ENCODE measurements at regions of chrX and their contacts with region 1.

Region 1: DNA sequence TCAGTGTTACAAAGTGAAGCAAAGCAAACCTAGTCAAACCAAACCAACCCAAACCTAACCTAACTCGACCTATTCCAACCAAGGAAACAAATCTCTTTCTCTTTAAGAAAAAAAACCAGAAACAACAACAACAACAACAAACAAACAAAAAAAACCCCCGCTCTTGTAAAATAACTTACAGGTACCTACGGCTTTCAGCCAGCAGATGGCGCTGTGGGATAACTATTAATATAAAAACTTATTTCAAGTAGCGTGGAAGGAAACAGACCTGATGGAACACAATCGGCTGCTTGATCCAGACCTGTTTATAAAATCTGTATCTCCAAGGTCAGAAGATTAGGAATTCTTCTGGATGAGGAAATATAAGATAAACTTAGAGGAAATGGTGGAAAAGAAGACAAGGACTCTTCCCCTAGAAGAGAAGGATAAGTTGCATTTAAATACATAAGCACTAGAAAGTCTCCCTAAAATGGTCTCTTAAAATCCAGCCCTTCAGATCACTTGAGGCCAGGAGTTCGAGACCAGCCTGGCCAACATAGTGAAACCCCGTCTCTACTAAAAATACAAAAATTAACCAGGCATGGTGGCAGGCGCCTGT is 34.4 kb upstream of the CDKL5 start:
- DNase-seq: peak; percentile 85
- H3K4me3 Mint-ChIP-seq: no peak overlapping the region
- H3K27ac Mint-ChIP-seq: no peak overlapping the region
- H3K4me1 Mint-ChIP-seq: peaks cover 4% of the 10 kb centered on the region
- H3K27me3 Mint-ChIP-seq: no peaks in the 10 kb centered on the region

Region 2: DNA sequence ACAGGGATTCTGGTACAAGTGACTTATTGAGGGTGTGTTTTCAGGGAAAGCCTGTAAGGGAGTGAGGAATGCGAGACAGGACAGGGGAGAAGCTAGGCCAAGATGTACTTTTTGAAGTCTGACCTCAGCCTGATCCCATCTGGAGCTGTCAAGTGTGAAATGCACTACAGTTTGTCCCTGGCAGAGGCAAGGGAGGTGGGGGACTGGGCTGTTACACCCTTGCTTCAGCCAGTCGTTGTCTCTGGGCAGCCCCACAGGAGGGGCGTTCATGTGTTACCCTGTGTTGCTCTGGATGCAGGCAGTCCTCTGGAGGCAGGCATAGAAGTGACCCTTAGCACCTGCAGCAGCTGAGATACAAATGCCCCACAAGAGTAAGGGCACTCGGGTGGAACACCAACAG is 342.2 kb after region 1 on chrX:
- intact Hi-C with region 1: no loop called
- DNase-seq: no peak
- H3K4me3 Mint-ChIP-seq: no peak overlapping the region
- H3K27ac Mint-ChIP-seq: no peak overlapping the region
- H3K4me1 Mint-ChIP-seq: no peaks in the 10 kb centered on the region
- H3K27me3 Mint-ChIP-seq: no peaks in the 10 kb centered on the region

Region 3: GRCh38 chrX:18899796-18900447 is 508.9 kb after region 1 on chrX:
- intact Hi-C with region 1: loop called (anchors 10 kb)
- DNase-seq: no peak
- H3K4me3 Mint-ChIP-seq: no peak overlapping the region
- H3K27ac Mint-ChIP-seq: no peak overlapping the region
- H3K4me1 Mint-ChIP-seq: no peaks in the 10 kb centered on the region
- H3K27me3 Mint-ChIP-seq: no peaks in the 10 kb centered on the region

Region 4: DNA sequence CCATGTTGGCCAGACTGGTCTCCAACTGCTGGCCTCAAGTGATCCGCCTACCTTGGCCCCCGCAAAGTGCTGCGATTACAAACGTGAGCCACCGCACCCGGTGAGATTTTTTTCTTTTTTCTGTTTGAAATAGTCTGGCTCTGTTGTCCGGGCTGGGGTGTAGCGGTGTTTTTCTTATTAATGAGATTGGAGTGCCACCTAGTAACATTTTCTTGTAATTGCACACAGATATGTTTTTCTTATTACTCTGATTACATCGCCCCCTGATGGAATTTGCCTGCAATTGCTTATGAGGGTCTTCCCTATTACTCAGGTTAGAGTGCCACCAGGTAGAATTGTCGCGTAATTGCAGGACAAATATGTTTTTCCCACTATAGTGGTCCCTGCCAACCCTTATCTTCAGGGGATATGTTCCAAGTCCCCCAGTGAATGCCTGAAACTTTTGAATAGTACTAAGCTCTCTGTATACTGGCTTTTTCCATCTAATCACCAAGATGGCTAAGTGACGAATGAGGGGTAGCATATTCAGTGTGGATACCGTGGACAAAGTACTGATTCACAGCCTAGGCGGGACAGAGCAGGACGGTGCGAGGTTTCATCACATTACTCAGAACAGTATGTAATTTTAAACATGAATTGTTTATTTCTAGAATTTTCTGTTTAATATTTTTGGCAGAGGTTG is 944.0 kb after region 1 on chrX:
- intact Hi-C with region 1: loop called (anchors 1 kb)
- DNase-seq: peak; percentile 70
- H3K4me3 Mint-ChIP-seq: no peak overlapping the region
- H3K27ac Mint-ChIP-seq: no peak overlapping the region
- H3K4me1 Mint-ChIP-seq: no peaks in the 10 kb centered on the region
- H3K27me3 Mint-ChIP-seq: no peaks in the 10 kb centered on the region